ENCODE measurements at regions of chr1 and their contacts with region 1.

Region 1: GRCh38 chr1:197633447-197634039 is 141.7 kb downstream of the DENND1B start:
- DNase-seq: no peak
- ATAC-seq: no peak
- H3K4me3 ChIP-seq: no peak overlapping the region
- H3K27ac ChIP-seq: no peak overlapping the region
- H3K4me1 ChIP-seq: no peaks in the 10 kb centered on the region
- H3K27me3 ChIP-seq: no peaks in the 10 kb centered on the region
- CTCF ChIP-seq: no peak
- EP300 ChIP-seq: no peak
- POLR2A ChIP-seq: no peak
- RAD21 ChIP-seq: no peak

Region 2: DNA sequence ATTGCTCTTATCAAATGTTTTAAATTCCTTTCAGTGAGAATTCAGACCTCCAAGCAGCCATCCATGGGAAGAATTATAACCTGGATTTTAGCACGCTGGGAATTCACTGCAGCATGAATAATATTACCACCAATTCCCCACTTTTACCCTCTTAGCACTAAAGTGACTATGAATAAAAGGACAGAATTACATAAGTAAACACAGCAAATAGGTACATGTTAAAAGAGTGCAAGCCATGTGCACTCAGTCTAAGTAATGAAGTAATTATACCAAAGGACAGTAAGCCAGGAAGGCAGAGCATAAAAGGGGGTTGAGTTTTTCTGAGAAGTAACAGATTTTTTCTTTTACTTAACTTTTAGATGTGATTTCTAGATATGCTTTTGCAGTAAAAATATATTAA is 34.6 kb before region 1 on chr1:
- CTCF ChIA-PET with region 1: no interaction called
- POLR2A ChIA-PET with region 1: no interaction called
- in situ Hi-C with region 1: no loop called
- intact Hi-C with region 1: loop called (anchors 1 kb)
- DNase-seq: no peak
- ATAC-seq: no peak
- H3K4me3 ChIP-seq: no peak overlapping the region
- H3K27ac ChIP-seq: no peak overlapping the region
- H3K4me1 ChIP-seq: 0 out of 2 replicates have a peak, but pooled peaks cover under 1% of the 10 kb centered on the region
- H3K27me3 ChIP-seq: no peaks in the 10 kb centered on the region
- CTCF ChIP-seq: no peak
- EP300 ChIP-seq: no peak
- POLR2A ChIP-seq: no peak
- RAD21 ChIP-seq: no peak

Measured in HepG2 (cell line).